ENCODE measurements at regions of chr1 and their contacts with region 1.

Region 1: DNA sequence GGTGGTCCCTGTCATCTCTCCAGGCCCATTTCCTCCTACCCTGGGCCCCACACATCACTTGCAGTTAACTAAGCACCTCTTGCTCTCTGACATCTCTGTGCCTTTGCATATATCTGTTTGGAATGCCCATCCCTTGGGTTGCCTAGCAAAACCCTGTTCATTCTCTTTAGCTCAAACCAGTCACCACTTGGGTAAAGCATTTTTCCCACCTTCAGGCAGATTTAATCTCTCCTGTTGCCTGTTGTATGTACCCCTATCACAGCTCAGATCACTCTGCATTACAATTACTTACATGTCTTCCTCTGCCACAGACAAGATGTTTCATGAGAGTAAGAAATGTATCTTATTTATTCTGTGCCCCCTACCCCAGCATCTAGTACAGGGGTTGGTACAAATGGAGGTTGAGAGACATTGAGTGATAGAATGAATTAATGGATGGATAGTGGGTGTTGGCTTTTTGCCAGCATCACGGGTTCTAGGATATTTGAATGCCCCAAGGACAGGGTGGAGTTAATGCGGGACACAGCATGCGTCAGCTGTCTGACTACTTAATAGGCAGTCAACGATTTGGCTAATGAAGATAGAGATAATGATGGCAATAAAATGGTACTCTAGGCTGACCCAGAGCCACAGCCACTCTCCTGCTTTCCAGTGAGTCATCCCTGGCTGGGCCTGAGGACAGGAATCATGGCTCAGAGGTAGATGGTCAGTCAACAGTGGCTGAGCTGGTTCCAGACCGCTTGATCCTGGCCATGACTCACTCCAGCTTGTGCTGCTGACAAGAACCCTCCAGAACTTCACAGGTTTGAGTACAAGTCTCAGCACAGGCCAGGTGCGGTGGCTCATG is 6.5 kb downstream of the NR0B2 start:
- DNase-seq: no peak
- H3K4me3 ChIP-seq: no peak overlapping the region
- H3K27ac ChIP-seq: no peak overlapping the region
- H3K4me1 ChIP-seq: no peaks in the 10 kb centered on the region
- H3K27me3 ChIP-seq: peaks cover 0 to 2% (median 0%) of the 10 kb centered on the region in 4 experiments; a peak in 1 of 7 replicates
- CTCF ChIP-seq: no peak
- EP300 ChIP-seq: no peak
- POLR2A ChIP-seq: no peak
- RAD21 ChIP-seq: no peak

Region 2: GRCh38 chr1:26921540-26922430 is 14.5 kb after region 1 on chr1 and contains the start of gene NUDC:
- CTCF ChIA-PET with region 1: interaction called, 3 read pairs
- POLR2A ChIA-PET with region 1: interaction called, 12 read pairs
- DNase-seq: peak; percentile 88 to 92
- H3K4me3 ChIP-seq: peak within 1 kb of the TSS; percentile 70 to 88 (median 82)
- H3K27ac ChIP-seq: peak within 1 kb of the TSS; percentile 90
- H3K4me1 ChIP-seq: peaks cover 0 to 6% (median 4%) of the 10 kb centered on the region in 4 experiments; a peak in 3 of 7 replicates
- H3K27me3 ChIP-seq: no peaks in the 10 kb centered on the region
- CTCF ChIP-seq: no peak
- EP300 ChIP-seq: no peak
- POLR2A ChIP-seq: peak; percentile 66 to 94
- RAD21 ChIP-seq: no peak
- total RNA-seq, gene NUDC: 131 and 134 TPM in 2 replicates

Region 3: GRCh38 chr1:27176323-27176722 is 269.0 kb after region 1 on chr1:
- CTCF ChIA-PET with region 1: no interaction called
- POLR2A ChIA-PET with region 1: no interaction called
- DNase-seq: no peak
- H3K4me3 ChIP-seq: no peak overlapping the region
- H3K27ac ChIP-seq: no peak overlapping the region
- H3K4me1 ChIP-seq: no peaks in the 10 kb centered on the region
- H3K27me3 ChIP-seq: no peaks in the 10 kb centered on the region
- CTCF ChIP-seq: no peak
- EP300 ChIP-seq: no peak
- POLR2A ChIP-seq: no peak
- RAD21 ChIP-seq: no peak

Measured in H1 (cell line).